ENCODE measurements at regions of chr6 and their contacts with region 1.

Region 1: DNA sequence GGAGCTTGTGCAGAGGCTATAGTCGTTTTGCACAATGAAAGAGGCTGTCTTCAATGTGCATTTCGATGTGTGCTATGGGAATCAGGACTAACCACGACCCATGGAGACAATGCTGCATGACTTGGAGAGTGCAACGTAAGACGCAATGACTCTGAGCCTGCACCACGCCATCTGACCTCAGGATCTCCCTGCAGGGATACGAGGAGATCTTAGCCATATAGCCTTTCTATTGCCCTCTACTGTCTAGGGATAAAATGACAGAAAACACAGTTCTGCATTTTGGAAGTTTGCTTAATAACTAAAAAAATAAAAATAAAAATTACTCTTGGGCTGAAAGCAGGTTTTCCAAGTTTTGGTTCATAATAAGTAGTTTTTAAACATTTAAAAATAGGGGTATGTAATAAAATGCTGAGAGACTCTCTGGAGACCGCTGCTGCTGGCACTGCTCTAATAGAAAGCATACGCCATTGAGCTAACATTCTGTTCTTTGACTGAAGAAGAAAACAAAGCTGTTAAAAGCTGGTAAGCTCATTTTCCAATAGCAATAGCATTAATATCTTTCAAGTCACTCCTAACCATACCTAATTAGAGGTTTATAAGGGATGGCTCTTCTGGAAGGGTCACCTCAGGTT is 87.2 kb downstream of the PDE7B start:
- DNase-seq: no peak
- ATAC-seq: no peak
- H3K4me3 ChIP-seq: no peak overlapping the region
- H3K4me3 Mint-ChIP-seq: no peak overlapping the region
- H3K27ac ChIP-seq: no peak overlapping the region
- H3K27ac Mint-ChIP-seq: no peak overlapping the region
- H3K4me1 ChIP-seq: no peaks in the 10 kb centered on the region
- H3K4me1 Mint-ChIP-seq: no peaks in the 10 kb centered on the region
- H3K27me3 ChIP-seq: no peaks in the 10 kb centered on the region
- H3K27me3 Mint-ChIP-seq: no peaks in the 10 kb centered on the region
- CTCF ChIP-seq: peak; percentile 19

Region 2: DNA sequence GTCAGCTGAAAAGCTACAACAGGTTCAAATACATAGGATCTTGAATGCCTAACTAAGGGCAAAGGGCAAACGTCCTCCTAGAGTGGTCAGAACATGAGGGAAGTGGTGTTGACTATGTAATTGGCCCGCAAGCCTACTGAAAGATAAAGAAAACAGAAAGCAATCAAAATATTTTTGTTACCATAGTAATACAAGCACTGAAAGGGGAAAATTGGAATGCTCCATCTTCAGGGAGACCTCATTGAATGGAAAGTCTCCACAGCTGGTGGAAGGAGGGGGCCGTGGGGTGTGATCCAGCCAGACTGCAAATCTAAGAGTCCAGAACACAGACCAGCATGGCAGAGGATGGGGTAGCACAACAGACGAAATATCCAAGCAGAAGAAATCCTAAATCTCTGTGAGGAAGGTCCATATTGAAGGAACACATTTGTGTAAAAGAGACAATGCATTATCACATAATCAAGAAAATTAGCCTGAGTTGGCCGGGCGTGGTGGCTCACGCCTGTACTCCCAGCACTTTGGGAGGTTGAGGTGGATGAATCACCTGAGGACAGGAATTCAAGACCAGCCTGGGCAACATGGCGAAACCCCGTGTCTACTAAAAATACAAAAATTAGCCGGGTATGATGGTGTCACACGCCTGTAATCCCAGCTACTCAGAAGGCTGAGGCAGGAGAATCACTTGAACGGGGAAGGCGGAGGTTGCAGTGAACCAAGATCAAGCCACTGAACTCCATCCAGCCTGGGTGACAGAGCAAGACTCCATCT is 271.9 kb after region 1 on chr6:
- CTCF ChIA-PET with region 1: no interaction called
- POLR2A ChIA-PET with region 1: interaction called, 10 read pairs
- intact Hi-C with region 1: no loop called
- DNase-seq: no peak
- ATAC-seq: no peak
- H3K4me3 ChIP-seq: no peak overlapping the region
- H3K4me3 Mint-ChIP-seq: no peak overlapping the region
- H3K27ac ChIP-seq: no peak overlapping the region
- H3K27ac Mint-ChIP-seq: no peak overlapping the region
- H3K4me1 ChIP-seq: no peaks in the 10 kb centered on the region
- H3K4me1 Mint-ChIP-seq: no peaks in the 10 kb centered on the region
- H3K27me3 ChIP-seq: peaks cover 0 to 2% (median 0%) of the 10 kb centered on the region in 4 experiments
- H3K27me3 Mint-ChIP-seq: no peaks in the 10 kb centered on the region
- CTCF ChIP-seq: no peak